ENCODE measurements at regions of chr6 and their contacts with region 1.

Region 1: GRCh38 chr6:144726129-144726522 is 441.0 kb downstream of the UTRN start:
- DNase-seq: no peak
- H3K4me3 Mint-ChIP-seq: peak overlapping the region; percentile 15
- H3K27ac Mint-ChIP-seq: peak overlapping the region; percentile 2
- H3K4me1 Mint-ChIP-seq: peaks cover 42% of the 10 kb centered on the region
- H3K27me3 Mint-ChIP-seq: no peaks in the 10 kb centered on the region

Region 2: DNA sequence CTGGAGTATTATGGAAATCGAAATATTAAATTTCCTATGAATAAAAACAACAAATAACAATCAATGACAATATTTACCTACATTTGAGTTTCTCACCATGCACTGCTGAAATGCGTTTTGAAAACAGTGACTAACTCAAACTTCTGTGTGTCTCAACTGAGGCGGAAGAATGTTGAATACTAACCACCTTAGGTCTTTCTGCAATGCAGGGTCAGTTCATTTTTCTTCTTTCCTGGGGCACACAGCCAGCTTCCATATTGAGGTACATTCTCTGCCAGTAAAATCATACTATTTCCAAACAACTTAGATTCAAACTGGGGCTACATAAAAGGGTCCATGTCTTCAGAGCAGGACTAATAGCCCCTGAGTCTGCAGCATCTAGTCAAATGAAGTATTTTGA is 130.9 kb before region 1 on chr6:
- intact Hi-C with region 1: loop called (anchors 5 kb)
- DNase-seq: no peak
- H3K4me3 Mint-ChIP-seq: no peak overlapping the region
- H3K27ac Mint-ChIP-seq: no peak overlapping the region
- H3K4me1 Mint-ChIP-seq: peaks cover 18% of the 10 kb centered on the region
- H3K27me3 Mint-ChIP-seq: no peaks in the 10 kb centered on the region

Region 3: DNA sequence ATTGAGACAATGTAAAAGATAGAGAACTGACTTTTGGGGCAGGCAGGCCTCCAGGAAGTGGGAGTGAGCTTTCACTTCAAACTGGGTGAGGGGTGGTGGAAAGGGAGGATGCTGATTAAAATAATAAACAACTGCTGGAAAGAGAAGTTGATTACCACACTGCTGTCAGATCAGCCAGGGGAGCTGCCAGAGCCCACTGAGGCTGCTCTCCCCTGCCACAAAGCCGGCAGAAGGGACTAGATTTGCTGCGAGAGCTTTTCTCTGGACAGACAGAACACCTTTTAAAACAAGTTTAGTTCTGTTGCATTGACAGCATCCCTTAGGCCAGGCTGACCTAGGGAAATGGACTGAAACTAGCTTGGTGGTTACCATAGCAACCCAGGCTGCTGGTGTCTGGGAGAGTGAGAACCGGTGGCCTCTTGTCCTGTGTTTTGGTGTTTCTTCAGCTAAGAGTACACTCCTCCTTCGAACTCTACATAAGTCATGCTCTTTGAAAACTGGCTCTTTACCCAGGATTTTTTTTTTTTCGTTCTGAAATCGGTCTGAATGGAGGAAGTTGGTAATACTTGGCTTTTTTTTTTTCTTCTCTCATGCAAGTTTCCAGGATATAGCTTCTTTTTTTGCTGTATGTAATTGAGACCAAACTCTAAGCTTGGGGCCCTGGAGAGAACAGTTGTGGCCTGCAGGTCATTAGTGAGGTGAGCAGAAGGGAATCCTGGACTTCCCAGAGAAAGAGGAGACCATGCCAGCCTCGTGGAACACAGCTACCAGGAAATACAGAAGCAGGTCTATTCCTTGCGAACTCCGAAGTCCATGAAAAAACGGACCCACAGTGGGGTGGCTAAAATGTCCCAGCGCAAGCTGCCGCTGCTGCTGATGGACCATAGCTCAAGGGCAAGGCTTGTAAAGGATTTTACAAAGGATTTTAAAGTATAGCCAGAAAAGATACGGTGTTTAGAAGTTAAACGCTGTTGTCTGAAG is 66.6 kb before region 1 on chr6:
- intact Hi-C with region 1: loop called (anchors 5 kb)
- DNase-seq: peak; percentile 71
- H3K4me3 Mint-ChIP-seq: peak overlapping the region; percentile 67
- H3K27ac Mint-ChIP-seq: peak overlapping the region; percentile 88
- H3K4me1 Mint-ChIP-seq: peaks cover 24% of the 10 kb centered on the region
- H3K27me3 Mint-ChIP-seq: no peaks in the 10 kb centered on the region

Region 4: DNA sequence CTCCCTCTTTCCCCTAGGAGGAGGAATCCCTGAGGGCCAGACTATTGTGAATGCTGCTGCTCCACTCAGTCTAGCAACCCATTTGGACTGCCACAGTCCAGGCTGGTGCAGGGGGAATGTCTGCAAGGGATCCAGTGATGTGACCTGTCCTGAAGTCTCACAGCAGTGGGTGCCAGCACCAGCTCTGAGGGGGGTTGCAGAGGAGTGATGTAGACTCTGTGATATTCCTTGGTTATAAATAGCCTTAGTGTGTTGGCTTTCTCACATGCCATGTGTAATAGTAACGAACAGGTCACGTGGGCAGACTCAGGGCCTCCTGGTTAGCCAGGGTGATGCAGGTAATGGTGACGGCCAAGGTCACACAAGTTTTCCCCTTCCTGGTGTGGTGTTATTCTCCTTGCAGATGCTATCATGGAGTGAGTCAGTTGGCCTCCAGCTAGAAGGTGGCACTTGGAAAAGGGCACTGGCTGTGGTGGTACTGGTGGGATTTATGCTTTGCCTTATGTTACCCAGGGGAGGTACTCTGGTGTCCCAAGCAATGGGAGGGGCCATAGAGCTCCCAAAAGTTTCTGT is 36.5 kb before region 1 on chr6:
- intact Hi-C with region 1: no loop called
- DNase-seq: no peak
- H3K4me3 Mint-ChIP-seq: no peak overlapping the region
- H3K27ac Mint-ChIP-seq: no peak overlapping the region
- H3K4me1 Mint-ChIP-seq: no peaks in the 10 kb centered on the region
- H3K27me3 Mint-ChIP-seq: no peaks in the 10 kb centered on the region

Region 5: GRCh38 chr6:145147981-145148783 is 422.1 kb after region 1 on chr6:
- intact Hi-C with region 1: no loop called
- DNase-seq: no peak
- H3K4me3 Mint-ChIP-seq: no peak overlapping the region
- H3K27ac Mint-ChIP-seq: no peak overlapping the region
- H3K4me1 Mint-ChIP-seq: no peaks in the 10 kb centered on the region
- H3K27me3 Mint-ChIP-seq: peaks cover 5% of the 10 kb centered on the region